ENCODE measurements at regions of chr19 and their contacts with region 1.

Region 1: DNA sequence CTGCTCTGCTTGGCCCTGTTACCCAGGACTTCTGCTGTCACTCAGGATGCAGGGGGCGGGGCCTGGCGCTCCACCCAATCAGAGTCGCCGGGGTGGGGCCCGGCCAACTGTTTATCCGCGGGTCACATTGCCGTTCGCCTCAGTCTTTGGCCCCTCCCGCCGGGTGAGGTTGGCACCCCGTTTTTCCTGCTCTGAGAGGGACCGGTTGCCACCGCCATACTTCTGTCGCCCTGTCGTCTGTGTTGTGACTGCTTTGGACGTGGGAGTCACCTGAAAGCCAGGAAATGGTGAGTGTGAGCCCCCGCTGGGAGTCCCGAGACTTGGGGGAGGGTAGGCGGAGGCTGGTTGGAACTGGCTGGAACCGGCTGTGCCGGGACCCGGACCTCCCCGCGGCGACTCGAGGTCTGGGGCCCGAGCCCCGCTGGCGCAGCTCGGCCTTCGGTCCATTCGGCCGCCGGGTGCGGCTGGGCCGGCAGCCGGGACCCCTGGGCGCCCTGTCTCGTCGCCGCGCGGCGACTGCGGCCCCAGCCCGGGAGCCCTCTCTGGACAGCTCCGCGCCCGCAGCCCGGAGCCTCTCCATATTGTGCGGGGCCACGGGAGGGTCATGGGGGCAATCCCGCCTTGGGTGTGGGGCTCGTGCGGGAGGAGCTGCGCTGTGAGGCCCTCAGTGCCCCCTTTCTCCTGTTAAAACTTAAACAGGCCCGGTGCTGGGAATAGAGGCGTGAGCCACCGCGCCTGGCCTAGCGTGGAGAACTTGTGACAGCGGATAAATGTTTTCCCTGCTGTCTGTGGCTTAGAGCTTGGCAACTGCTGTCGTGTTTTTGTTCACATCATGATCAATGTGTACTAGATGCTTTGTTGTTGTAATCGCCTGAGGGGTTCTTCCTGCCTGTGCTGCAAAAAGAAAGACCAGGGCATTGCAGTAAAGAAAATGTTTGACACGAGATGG is at the start of gene ZNF844:
- DNase-seq: peak; percentile 86
- H3K4me3 Mint-ChIP-seq: peak within 1 kb of the TSS; percentile 81
- H3K27ac Mint-ChIP-seq: peak within 1 kb of the TSS; percentile 54
- H3K4me1 Mint-ChIP-seq: peaks cover 10% of the 10 kb centered on the region
- H3K27me3 Mint-ChIP-seq: peaks cover 2% of the 10 kb centered on the region
- total RNA-seq, gene ZNF844: 2.5 TPM

Region 2: DNA sequence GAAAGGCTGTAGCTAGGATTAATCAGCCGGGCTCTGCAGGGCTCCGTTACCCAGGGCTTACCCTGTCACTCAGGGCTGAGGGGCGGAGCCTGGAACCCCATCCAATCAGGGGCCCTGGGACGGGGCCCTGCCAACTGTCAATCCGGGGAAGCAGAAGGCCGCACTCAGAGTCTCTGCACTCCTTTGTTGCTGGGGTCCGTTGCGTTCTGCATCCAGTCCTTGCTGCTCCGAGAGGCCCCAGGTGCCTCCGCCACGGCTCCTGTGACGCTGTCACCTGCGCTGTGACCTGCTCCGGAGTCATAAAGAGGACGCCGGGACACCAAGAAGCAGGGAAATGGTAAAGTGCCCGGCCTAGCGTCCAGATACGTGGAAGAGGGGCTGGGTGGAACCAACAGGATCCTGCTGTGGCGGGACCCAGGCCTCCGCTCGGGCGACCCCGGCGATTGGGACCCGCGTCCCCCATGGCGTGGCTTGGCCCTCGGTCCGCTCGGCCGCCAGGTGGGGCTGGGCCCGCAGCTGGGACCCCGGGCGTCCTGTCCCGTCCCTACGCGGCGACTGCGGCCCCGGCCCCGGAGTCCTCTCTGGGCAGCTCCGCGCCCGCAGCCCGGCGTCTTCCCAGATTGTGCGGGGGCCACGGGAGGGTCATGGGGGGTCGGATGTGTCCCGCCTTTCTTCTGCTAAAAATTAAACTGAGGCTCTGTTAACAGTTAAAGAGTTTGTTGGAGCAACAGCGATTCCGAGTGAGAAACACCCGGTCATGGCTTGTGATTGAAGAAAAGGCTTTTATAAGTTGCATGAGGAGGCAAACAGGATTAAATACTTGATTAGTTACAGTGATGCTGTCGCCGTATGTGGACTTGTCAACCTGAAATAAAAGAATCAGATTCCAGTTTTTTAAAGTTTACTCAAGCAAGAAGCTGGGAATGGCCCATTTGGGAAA is 266.2 kb before region 1 on chr19 and contains the start of gene ZNF491:
- CTCF ChIA-PET with region 1: interaction called, 10 read pairs
- POLR2A ChIA-PET with region 1: no interaction called
- intact Hi-C with region 1: no loop called
- DNase-seq: peak; percentile 93
- H3K4me3 Mint-ChIP-seq: peak within 1 kb of the TSS; percentile 84
- H3K27ac Mint-ChIP-seq: no peak within 1 kb of the TSS
- H3K4me1 Mint-ChIP-seq: peaks cover 16% of the 10 kb centered on the region
- H3K27me3 Mint-ChIP-seq: no peaks in the 10 kb centered on the region
- total RNA-seq, gene ZNF491: 0.33 to 0.46 TPM

Region 3: DNA sequence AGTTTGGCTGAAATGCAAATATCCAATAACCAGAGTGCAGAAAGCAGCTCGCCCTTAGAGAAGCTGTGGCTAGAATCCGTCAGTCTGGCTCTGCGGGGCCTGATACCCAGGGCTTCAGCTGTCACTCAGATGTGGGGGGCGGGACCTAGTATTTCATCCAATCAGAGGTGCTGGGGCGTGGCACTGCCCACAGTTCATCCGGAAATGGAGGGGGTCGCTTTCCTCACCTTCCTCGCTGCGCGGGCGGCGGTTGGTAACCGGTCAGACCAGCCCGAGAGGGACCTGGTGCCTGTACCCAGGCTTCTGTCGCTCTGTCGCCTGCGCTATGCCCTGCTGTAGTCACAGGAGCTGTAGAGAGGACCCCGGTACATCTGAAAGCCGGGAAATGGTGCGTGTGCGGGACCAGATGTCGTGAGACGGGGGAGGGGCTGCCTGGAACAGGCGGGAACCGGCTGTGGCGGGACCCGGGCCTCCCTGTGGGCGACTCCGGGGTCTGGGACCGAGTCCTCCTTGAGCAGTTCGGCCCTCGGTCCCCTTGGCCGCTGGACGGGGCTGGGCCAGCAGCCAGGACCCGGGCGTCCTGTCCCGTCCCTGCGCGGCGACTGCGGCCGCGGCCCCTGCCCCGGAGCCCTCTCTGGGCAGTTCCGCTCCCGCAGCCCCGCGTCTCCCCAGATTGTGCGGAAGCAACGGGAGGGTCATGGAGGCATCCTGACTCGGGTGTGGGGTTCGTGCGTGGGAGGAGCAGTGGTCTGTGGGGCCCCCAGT is 139.8 kb before region 1 on chr19 and contains the start of gene ZNF700:
- CTCF ChIA-PET with region 1: interaction called, 32 read pairs
- POLR2A ChIA-PET with region 1: no interaction called
- intact Hi-C with region 1: no loop called
- DNase-seq: peak; percentile 97
- H3K4me3 Mint-ChIP-seq: peak within 1 kb of the TSS; percentile 96
- H3K27ac Mint-ChIP-seq: peak within 1 kb of the TSS; percentile 99
- H3K4me1 Mint-ChIP-seq: peaks cover 35% of the 10 kb centered on the region
- H3K27me3 Mint-ChIP-seq: no peaks in the 10 kb centered on the region
- total RNA-seq, gene ZNF700: 12.9 to 13.0 TPM

Region 4: GRCh38 chr19:11987405-11988281 is 77.2 kb before region 1 on chr19:
- CTCF ChIA-PET with region 1: interaction called, 10 read pairs
- POLR2A ChIA-PET with region 1: interaction called, 3 read pairs
- intact Hi-C with region 1: no loop called
- DNase-seq: peak; percentile 97
- H3K4me3 Mint-ChIP-seq: peak overlapping the region; percentile 93
- H3K27ac Mint-ChIP-seq: peak overlapping the region; percentile 93
- H3K4me1 Mint-ChIP-seq: peaks cover 18% of the 10 kb centered on the region
- H3K27me3 Mint-ChIP-seq: no peaks in the 10 kb centered on the region

Region 5: DNA sequence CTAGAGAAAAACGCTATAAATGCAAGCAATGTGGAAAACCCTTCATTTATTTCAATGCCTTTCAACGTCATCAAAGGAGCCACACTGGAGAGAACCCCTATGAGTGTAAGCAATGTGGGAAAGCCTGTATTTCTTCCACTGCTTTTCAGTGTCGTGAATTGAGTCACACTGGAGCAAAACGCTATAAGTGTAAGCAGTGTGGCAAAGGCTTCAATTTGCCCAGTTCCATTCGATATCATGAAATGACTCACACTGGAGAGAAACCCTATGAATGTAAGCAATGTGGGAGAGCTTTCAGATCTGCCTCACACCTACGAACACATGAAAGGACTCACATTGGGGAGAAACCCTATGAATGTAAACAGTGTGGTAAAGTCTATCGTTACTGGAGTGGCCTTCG is 47.8 kb after region 1 on chr19:
- CTCF ChIA-PET with region 1: interaction called, 12 read pairs
- POLR2A ChIA-PET with region 1: no interaction called
- intact Hi-C with region 1: loop called (anchors 2 kb)
- DNase-seq: peak; percentile 36
- H3K4me3 Mint-ChIP-seq: no peak overlapping the region
- H3K27ac Mint-ChIP-seq: no peak overlapping the region
- H3K4me1 Mint-ChIP-seq: peaks cover 28% of the 10 kb centered on the region
- H3K27me3 Mint-ChIP-seq: peaks cover 2% of the 10 kb centered on the region

Region 6: DNA sequence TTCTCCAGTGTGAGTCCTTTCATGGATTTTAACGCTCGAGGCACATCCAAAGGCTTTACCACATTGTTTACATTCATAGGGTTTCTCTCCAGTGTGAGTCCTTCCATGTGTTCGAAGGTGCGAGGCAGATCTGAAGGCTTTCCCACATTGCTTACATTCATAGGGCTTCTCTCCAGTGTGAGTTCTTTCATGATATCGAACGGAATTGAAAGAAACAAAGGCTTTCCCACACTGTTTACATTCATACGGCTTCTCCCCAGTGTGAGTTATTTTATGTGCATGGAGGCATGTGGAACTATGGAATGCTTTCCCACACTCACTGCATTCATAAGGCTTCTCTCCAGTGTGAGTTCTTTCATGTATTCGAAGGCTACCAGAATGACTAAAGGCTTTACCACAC is 80.5 kb after region 1 on chr19:
- CTCF ChIA-PET with region 1: interaction called, 97 read pairs
- POLR2A ChIA-PET with region 1: interaction called, 4 read pairs
- intact Hi-C with region 1: loop called (anchors 1 kb)
- DNase-seq: no peak
- H3K4me3 Mint-ChIP-seq: no peak overlapping the region
- H3K27ac Mint-ChIP-seq: no peak overlapping the region
- H3K4me1 Mint-ChIP-seq: peaks cover 10% of the 10 kb centered on the region
- H3K27me3 Mint-ChIP-seq: no peaks in the 10 kb centered on the region

Region 7: GRCh38 chr19:12255372-12255771 is 190.5 kb after region 1 on chr19:
- CTCF ChIA-PET with region 1: no interaction called
- POLR2A ChIA-PET with region 1: no interaction called
- intact Hi-C with region 1: no loop called
- DNase-seq: peak; percentile 12
- H3K4me3 Mint-ChIP-seq: no peak overlapping the region
- H3K27ac Mint-ChIP-seq: peak overlapping the region; percentile 67
- H3K4me1 Mint-ChIP-seq: peaks cover 5% of the 10 kb centered on the region
- H3K27me3 Mint-ChIP-seq: no peaks in the 10 kb centered on the region

Region 8: GRCh38 chr19:12465211-12465610 is 400.3 kb after region 1 on chr19:
- CTCF ChIA-PET with region 1: no interaction called
- POLR2A ChIA-PET with region 1: no interaction called
- intact Hi-C with region 1: no loop called
- DNase-seq: no peak
- H3K4me3 Mint-ChIP-seq: no peak overlapping the region
- H3K27ac Mint-ChIP-seq: no peak overlapping the region
- H3K4me1 Mint-ChIP-seq: no peaks in the 10 kb centered on the region
- H3K27me3 Mint-ChIP-seq: no peaks in the 10 kb centered on the region

Region 9: DNA sequence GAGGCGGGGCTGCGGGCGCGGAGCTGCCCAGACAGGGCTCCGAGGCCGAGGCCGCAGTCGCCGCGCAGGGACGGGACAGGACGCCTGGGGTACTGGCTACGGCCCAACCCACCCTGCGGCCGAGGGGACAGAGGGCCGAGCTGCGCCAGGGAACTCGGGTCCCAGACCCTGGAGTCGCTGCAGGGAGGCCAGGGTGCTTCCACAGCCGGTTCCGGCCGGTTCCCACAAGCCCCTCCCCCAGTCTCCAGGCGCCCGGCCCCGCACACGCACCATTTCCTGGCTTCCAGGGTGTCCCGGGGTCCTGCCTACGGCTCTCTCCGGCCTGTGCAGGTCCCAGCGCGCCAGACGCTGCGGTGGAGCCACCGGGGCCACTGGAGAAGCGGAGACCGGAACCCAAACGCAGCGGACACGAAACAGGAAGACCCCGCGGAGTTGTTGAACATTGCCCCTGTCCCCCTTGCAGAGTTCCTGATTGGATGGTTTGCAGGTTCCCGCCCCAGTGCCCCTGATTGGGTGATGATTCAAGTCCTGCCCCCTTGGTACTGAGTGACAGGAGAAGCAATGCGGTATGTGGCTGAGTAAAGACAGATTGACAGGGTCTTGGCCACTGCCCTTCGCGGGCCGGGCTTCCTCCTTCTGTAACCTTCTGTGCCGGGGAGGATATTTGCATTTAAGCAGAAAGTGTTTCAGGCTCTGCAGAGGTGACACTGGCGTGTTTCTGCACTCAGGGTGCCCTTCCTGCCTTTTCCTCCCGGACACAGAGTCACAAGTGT is 486.4 kb after region 1 on chr19 and contains the start of gene ZNF564:
- CTCF ChIA-PET with region 1: no interaction called
- POLR2A ChIA-PET with region 1: no interaction called
- intact Hi-C with region 1: loop called (anchors 5 kb)
- DNase-seq: peak; percentile 95
- H3K4me3 Mint-ChIP-seq: peak within 1 kb of the TSS; percentile 94
- H3K27ac Mint-ChIP-seq: peak within 1 kb of the TSS; percentile 90
- H3K4me1 Mint-ChIP-seq: peaks cover 35% of the 10 kb centered on the region
- H3K27me3 Mint-ChIP-seq: no peaks in the 10 kb centered on the region
- total RNA-seq, gene ZNF564: 6.5 to 7.0 TPM

Measured in activated CD4-positive, alpha-beta memory T cell treated with anti-CD3 and anti-CD28 coated beads for 36 hours (primary cell).